K562 (cell line): ENCODE measurements at regions of chr10 and their contacts with region 1.

Region 1: GRCh38 chr10:73644015-73644743 is 2.9 kb upstream of the MYOZ1 start:
- DNase-seq: peak; percentile 74 to 83 (median 78)
- ATAC-seq: peak; percentile 86
- H3K4me3 ChIP-seq: no peak overlapping the region
- H3K27ac ChIP-seq: no peak overlapping the region
- H3K4me1 ChIP-seq: peaks cover 16 to 28% of the 10 kb centered on the region in 2 experiments
- H3K27me3 ChIP-seq: peaks cover 12 to 14% of the 10 kb centered on the region in 2 experiments; a peak in 4 of 5 replicates
- CTCF ChIP-seq: peak; percentile 86 to 96 (median 92)
- EP300 ChIP-seq: 0 out of 2 replicates have a peak, but pooled peaks have one; percentile 13
- POLR2A ChIP-seq: no peak
- RAD21 ChIP-seq: peak; percentile 99 to 100

Region 2: DNA sequence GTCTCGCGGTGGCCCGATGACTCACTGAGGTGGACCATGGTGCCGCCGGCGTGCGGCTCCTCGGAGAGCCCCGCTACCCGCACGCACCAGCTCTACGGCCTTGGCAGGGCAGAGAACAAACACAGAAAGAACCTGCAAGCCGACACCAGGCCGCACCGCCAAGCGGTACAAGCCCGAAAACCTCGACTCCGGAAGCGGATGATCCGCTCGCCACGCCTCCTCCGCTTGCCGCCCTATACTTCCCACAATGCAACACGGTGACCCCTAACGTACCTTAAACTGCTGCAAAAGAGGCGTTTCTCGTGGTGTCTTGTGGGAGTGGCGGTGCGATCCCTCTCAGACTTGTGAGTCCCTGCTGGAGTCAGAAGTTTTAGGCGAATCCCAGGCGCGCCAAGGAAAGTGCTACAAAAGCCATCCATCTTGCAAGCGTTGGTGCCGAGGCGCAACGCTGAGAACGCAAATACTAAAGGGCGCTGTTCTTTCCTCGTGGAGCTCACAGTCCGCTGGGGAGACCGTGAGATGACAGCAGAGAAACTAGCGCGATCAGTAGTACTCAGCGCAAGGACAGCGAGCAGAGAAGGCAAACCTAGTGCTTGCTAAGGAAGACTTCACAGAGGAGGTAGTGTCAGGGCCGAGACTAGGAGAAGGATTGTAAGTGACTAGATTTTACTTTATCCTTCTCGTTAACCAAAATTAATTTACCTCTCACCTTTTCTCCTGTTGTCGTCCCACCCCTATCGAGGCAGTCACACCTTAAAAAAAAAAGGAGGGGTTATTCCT is 391.5 kb before region 1 on chr10 and contains the start of gene MRPS16:
- CTCF ChIA-PET with region 1: no interaction called
- POLR2A ChIA-PET with region 1: interaction called, 3 read pairs
- in situ Hi-C with region 1: loop called (anchors 5 kb)
- intact Hi-C with region 1: loop called (anchors 5 kb)
- DNase-seq: peak; percentile 93 to 99 (median 95)
- ATAC-seq: peak; percentile 87
- H3K4me3 ChIP-seq: peak within 1 kb of the TSS; percentile 59
- H3K27ac ChIP-seq: peak within 1 kb of the TSS; percentile 89
- H3K4me1 ChIP-seq: peaks cover 7 to 28% of the 10 kb centered on the region in 2 experiments; a peak in 4 of 5 replicates
- H3K27me3 ChIP-seq: no peaks in the 10 kb centered on the region
- CTCF ChIP-seq: peak in 2 of 3 experiments; percentile 1 to 20; a peak in 2 of 6 replicates
- EP300 ChIP-seq: peak; percentile 52; the same call in 1 of the 2 replicates
- POLR2A ChIP-seq: peak; percentile 98
- RAD21 ChIP-seq: no peak
- polyA plus RNA-seq, gene MRPS16: 65.0 to 99.7 TPM

Region 3: DNA sequence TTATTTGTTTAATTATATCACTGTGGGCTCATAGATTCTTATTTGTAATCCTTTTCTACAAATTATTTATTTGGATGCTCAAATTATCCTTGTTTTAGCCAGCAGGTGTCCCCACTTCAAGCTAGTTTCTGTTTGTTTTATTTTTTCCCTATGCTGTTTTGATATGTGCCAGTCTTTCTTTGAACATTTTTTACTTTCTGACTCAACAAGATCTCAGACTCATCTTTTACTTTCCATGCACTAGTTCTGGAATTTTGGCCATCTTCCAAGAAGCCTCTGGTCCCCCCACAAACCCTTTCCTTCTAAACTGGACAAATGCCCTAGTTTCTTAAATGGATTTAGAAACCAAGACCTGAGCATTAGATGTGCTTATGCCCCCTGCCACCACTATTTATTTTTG is 380.2 kb before region 1 on chr10:
- CTCF ChIA-PET with region 1: interaction called, 13 read pairs
- POLR2A ChIA-PET with region 1: no interaction called
- in situ Hi-C with region 1: no loop called
- intact Hi-C with region 1: loop called (anchors 1 kb)
- DNase-seq: peak in 3 of 4 experiments; percentile 17 to 39 (median 21)
- ATAC-seq: peak; percentile 55; the same call in 2 of the 3 replicates
- H3K4me3 ChIP-seq: no peak overlapping the region
- H3K27ac ChIP-seq: no peak overlapping the region
- H3K4me1 ChIP-seq: peaks cover 0 to 7% of the 10 kb centered on the region in 2 experiments; a peak in 2 of 5 replicates
- H3K27me3 ChIP-seq: no peaks in the 10 kb centered on the region
- CTCF ChIP-seq: peak; percentile 49 to 75 (median 64); a peak in 4 of 6 replicates
- EP300 ChIP-seq: no peak
- POLR2A ChIP-seq: no peak
- RAD21 ChIP-seq: peak; percentile 55 to 72

Region 4: GRCh38 chr10:73406846-73407245 is 237.3 kb before region 1 on chr10:
- CTCF ChIA-PET with region 1: no interaction called
- POLR2A ChIA-PET with region 1: no interaction called
- in situ Hi-C with region 1: no loop called
- intact Hi-C with region 1: loop called (anchors 10 kb)
- DNase-seq: peak in 2 of 4 experiments; percentile 35 to 49
- ATAC-seq: peak; percentile 39
- H3K4me3 ChIP-seq: no peak overlapping the region
- H3K27ac ChIP-seq: no peak overlapping the region
- H3K4me1 ChIP-seq: peaks cover 17 to 20% of the 10 kb centered on the region in 2 experiments
- H3K27me3 ChIP-seq: no peaks in the 10 kb centered on the region
- CTCF ChIP-seq: no peak
- EP300 ChIP-seq: no peak
- POLR2A ChIP-seq: no peak
- RAD21 ChIP-seq: no peak

Region 5: GRCh38 chr10:73480158-73480557 is 164.0 kb before region 1 on chr10:
- CTCF ChIA-PET with region 1: no interaction called
- POLR2A ChIA-PET with region 1: no interaction called
- in situ Hi-C with region 1: no loop called
- intact Hi-C with region 1: no loop called
- DNase-seq: no peak
- ATAC-seq: no peak
- H3K4me3 ChIP-seq: no peak overlapping the region
- H3K27ac ChIP-seq: no peak overlapping the region
- H3K4me1 ChIP-seq: no peaks in the 10 kb centered on the region
- H3K27me3 ChIP-seq: no peaks in the 10 kb centered on the region
- CTCF ChIP-seq: no peak
- EP300 ChIP-seq: no peak
- POLR2A ChIP-seq: no peak
- RAD21 ChIP-seq: no peak

Region 6: GRCh38 chr10:73529089-73529832 is 114.9 kb before region 1 on chr10:
- CTCF ChIA-PET with region 1: interaction called, 140 read pairs
- POLR2A ChIA-PET with region 1: interaction called, 4 read pairs
- in situ Hi-C with region 1: loop called (anchors 5 kb)
- intact Hi-C with region 1: loop called (anchors 1 kb)
- DNase-seq: peak; percentile 78 to 87 (median 82)
- ATAC-seq: peak; percentile 98
- H3K4me3 ChIP-seq: no peak overlapping the region
- H3K27ac ChIP-seq: no peak overlapping the region
- H3K4me1 ChIP-seq: peaks cover 0 to 2% of the 10 kb centered on the region in 2 experiments; a peak in 3 of 5 replicates
- H3K27me3 ChIP-seq: no peaks in the 10 kb centered on the region
- CTCF ChIP-seq: peak; percentile 82 to 98 (median 83)
- EP300 ChIP-seq: no peak; the same call in 1 of the 2 replicates
- POLR2A ChIP-seq: no peak
- RAD21 ChIP-seq: peak; percentile 100

Region 7: DNA sequence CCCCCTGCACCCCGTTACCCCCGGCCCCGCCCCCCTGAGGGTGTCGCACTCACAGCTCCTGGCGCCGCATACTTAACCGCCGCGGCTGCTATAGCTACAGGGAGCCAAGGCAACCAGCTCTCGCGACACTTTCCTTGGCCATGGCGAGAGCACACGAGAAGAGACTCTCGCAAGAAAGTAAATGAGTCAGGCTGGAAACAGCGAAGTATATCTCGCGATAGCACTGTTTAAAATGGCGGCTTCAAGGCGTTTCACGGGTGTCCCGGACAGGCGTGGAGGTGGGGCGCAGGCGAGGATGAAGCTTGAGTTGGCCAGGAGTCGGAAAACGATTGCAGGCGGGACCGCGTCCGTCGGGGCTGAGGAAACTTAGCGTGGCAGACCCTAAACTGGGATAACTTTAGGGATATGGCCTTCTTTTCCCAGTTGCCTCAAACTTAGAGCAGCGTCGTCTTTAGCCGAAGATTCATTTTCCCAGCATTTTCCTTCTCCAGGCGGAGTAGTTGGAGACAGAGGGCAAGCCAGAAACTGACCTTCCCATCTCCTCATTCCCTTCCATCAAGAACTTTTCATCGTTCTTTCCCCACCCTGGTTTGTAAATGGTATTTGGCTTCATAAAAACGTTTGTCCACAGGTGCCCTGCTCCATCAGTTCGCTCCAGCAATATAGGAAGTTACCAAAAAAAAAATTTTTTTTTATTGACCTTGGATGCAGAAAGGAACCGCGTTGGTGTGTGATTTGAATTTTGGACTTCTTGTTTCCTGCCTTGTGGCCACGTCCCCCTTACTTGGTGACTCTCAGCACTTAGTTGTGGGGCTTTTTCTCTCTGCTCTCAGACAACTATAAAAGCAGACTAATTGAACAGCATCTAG is 18.1 kb before region 1 on chr10:
- CTCF ChIA-PET with region 1: no interaction called
- POLR2A ChIA-PET with region 1: interaction called, 12 read pairs
- in situ Hi-C with region 1: no loop called
- intact Hi-C with region 1: no loop called
- DNase-seq: peak; percentile 97 to 99 (median 98)
- ATAC-seq: peak; percentile 95
- H3K4me3 ChIP-seq: peak overlapping the region; percentile 86
- H3K27ac ChIP-seq: peak overlapping the region; percentile 87
- H3K4me1 ChIP-seq: peaks cover 7 to 14% of the 10 kb centered on the region in 2 experiments; a peak in 4 of 5 replicates
- H3K27me3 ChIP-seq: no peaks in the 10 kb centered on the region
- CTCF ChIP-seq: 0 out of 6 replicates have a peak, but pooled peaks of 1 of the 3 experiments have one; percentile 10
- EP300 ChIP-seq: no peak; the same call in 1 of the 2 replicates
- POLR2A ChIP-seq: peak; percentile 98
- RAD21 ChIP-seq: no peak

Region 8: DNA sequence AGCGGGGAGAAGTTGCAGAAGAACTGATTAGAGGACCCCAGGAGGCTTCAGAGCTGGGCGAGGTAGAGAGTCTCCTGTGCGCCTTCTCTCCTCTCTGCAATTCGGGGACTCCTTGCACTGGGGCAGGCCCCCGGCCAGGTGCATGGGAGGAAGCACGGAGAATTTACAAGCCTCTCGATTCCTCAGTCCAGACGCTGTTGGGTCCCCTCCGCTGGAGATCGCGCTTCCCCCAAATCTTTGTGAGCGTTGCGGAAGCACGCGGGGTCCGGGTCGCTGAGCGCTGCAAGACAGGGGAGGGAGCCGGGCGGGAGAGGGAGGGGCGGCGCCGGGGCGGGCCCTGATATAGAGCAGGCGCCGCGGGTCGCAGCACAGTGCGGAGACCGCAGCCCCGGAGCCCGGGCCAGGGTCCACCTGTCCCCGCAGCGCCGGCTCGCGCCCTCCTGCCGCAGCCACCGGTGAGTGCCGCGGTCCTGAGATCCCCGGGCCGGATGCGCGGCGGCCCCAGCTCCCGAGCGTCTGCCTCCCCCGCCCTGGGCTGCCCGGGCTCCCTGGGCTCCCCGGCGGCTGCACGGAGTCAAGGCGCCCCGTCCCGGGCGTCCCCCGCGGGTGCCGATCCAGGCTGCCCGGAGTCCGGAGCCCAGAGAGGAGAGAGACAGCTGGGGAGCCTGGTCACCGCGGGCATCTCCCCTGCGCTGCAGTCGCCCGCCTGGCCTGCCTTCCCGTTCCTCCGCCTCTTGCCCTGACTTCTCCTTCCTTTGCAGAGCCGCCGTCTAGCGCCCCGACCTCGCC is 266.8 kb after region 1 on chr10 and contains the start of gene PLAU:
- CTCF ChIA-PET with region 1: no interaction called
- POLR2A ChIA-PET with region 1: no interaction called
- in situ Hi-C with region 1: no loop called
- intact Hi-C with region 1: no loop called
- DNase-seq: peak; percentile 67 to 86 (median 77)
- ATAC-seq: peak; percentile 81
- H3K4me3 ChIP-seq: peak within 1 kb of the TSS; percentile 47
- H3K27ac ChIP-seq: peak within 1 kb of the TSS; percentile 2; the same call in 1 of the 3 replicates
- H3K4me1 ChIP-seq: peaks cover 25 to 38% of the 10 kb centered on the region in 2 experiments
- H3K27me3 ChIP-seq: no peaks in the 10 kb centered on the region; a peak in 1 of 5 replicates
- CTCF ChIP-seq: peak in 1 of 3 experiments; percentile 2; a peak in 1 of 6 replicates
- EP300 ChIP-seq: no peak
- POLR2A ChIP-seq: 0 out of 2 replicates have a peak, but pooled peaks have one; percentile 31
- RAD21 ChIP-seq: no peak
- polyA plus RNA-seq, gene PLAU: 2.3 to 2.5 TPM

Region 9: DNA sequence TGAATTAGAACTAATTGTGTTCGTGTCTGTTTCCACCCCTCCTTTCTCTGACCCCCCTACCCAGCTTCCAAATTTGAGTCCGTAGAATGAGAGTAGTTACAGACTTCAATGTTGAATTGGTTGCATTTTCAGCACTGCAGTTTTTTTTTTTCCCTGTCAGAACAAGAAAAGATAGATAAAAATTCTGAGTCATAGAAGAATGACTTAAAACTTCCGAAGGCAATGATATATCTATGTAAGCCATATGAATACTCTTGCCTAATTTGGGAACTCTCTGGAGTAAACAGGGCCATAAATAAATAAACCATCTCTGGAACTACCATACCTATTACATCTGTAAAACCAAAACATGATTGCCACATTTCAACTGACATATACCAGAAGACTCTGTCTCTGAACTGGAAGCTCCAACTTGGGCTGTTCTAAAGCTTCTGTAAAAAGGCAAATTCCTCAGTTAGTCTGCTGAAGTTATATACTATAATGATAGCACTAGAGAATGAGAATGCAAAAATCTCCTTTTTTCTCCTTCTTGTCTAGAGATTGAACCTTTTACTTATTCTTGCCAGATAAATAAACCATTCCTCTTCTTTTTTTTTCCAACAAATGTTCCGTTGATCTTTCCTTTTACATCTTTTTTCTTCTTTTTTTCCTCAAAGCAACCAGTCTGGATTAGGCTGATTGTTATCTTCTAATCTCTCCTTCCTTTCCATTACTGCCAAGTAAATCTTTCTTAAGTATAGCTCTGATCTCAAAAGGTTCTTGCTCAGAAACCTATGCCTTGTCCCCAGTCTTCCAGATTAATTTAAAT is 377.3 kb after region 1 on chr10:
- CTCF ChIA-PET with region 1: no interaction called
- POLR2A ChIA-PET with region 1: no interaction called
- in situ Hi-C with region 1: no loop called
- intact Hi-C with region 1: no loop called
- DNase-seq: peak in 3 of 4 experiments; percentile 45 to 80 (median 77)
- ATAC-seq: peak; percentile 81
- H3K4me3 ChIP-seq: peak overlapping the region; percentile 11; the same call in 1 of the 2 replicates
- H3K27ac ChIP-seq: peak overlapping the region; percentile 95
- H3K4me1 ChIP-seq: peaks cover 22 to 70% of the 10 kb centered on the region in 2 experiments
- H3K27me3 ChIP-seq: no peaks in the 10 kb centered on the region
- CTCF ChIP-seq: no peak
- EP300 ChIP-seq: peak; percentile 98
- POLR2A ChIP-seq: no peak
- RAD21 ChIP-seq: no peak; a peak in 2 of 4 replicates